Body of pancreas (tissue), 4 donors: ENCODE measurements at regions of chr10 and their contacts with region 1.

Region 1: DNA sequence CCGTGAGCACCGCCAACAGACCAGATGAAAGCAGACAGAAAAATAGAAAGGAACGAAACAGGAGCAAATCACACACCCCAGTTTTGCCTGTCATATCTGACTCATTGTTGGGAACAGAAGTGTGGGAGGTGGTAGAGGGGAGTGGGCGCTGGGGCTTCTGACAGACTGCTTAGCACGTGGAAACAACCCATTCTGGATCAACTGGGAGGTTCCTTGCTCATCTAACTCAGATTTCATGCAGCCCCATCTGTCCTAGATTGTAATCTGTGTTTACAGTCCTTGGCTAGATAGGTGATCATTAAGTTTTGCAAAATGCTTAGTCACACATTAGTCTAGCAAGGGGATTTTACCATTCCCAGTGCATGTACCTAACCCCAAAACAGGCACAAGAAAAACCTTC is 154.1 kb downstream of the NRP1 start:
- DNase-seq: no peak
- ATAC-seq: no peak
- H3K4me3 ChIP-seq: no peak overlapping the region
- H3K27ac ChIP-seq: no peak overlapping the region
- H3K4me1 ChIP-seq: no peaks in the 10 kb centered on the region
- H3K27me3 ChIP-seq: no peaks in the 10 kb centered on the region
- CTCF ChIP-seq: no peak
- POLR2A ChIP-seq: no peak

Region 2: DNA sequence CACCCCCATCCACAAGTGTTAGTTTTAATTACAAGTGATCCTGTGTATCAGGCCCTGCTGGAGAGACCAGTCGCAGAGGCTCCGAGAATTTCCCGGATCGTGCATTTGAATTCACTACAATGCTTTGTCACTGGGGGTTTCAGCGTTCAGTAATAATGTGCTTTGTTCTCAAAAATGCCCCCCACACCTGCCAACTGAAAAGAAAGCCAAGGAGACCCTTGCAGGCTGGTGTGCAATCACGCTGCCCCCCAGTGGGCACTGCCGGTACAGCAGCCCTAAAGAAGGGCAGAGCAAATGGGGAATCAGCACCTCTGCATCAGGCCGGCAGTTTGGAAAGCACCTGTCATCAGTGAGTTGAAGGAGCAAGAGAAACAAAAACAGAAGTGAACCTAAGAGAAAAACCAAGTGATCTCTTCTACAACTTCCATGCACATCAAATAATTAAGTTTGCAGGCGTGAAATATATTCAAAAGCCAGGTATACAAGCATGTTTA is 1457.1 kb after region 1 on chr10:
- intact Hi-C with region 1: loop called (anchors 10 kb)
- DNase-seq: peak; percentile 56 to 80 (median 63)
- ATAC-seq: peak; percentile 64
- H3K4me3 ChIP-seq: no peak overlapping the region
- H3K27ac ChIP-seq: no peak overlapping the region
- H3K4me1 ChIP-seq: peaks cover 21% of the 10 kb centered on the region
- H3K27me3 ChIP-seq: no peaks in the 10 kb centered on the region
- CTCF ChIP-seq: peak; percentile 66 to 96 (median 86)
- POLR2A ChIP-seq: no peak